Transverse colon (tissue), 4 donors: ENCODE measurements at regions of chr2 and their contacts with region 1.

Region 1: GRCh38 chr2:113198790-113199612 is 25.2 kb downstream of the PSD4 start:
- DNase-seq: peak; percentile 88
- H3K4me3 ChIP-seq: peak overlapping the region; percentile 40 to 83 (median 52)
- H3K27ac ChIP-seq: peak overlapping the region; percentile 81 to 94 (median 89)
- H3K4me1 ChIP-seq: peaks cover 0 to 15% (median 9%) of the 10 kb centered on the region in 4 donors
- H3K27me3 ChIP-seq: no peaks in the 10 kb centered on the region
- CTCF ChIP-seq: peak; percentile 73 to 99 (median 91)
- EP300 ChIP-seq: no peak
- POLR2A ChIP-seq: peak; percentile 79

Region 2: GRCh38 chr2:112159454-112159921 is 1039.5 kb before region 1 on chr2:
- in situ Hi-C with region 1: no loop called
- intact Hi-C with region 1: no loop called
- DNase-seq: no peak
- H3K4me3 ChIP-seq: no peak overlapping the region
- H3K27ac ChIP-seq: no peak overlapping the region
- H3K4me1 ChIP-seq: no peaks in the 10 kb centered on the region
- H3K27me3 ChIP-seq: no peaks in the 10 kb centered on the region
- CTCF ChIP-seq: no peak
- EP300 ChIP-seq: no peak
- POLR2A ChIP-seq: no peak

Region 3: GRCh38 chr2:113138428-113139322 is 60.3 kb before region 1 on chr2:
- in situ Hi-C with region 1: loop called in 3 of 4 experiments (anchors 10 kb)
- intact Hi-C with region 1: no loop called
- DNase-seq: no peak
- H3K4me3 ChIP-seq: peak overlapping the region in 1 of 4 donors; percentile 26
- H3K27ac ChIP-seq: peak overlapping the region in 1 of 4 donors; percentile 31
- H3K4me1 ChIP-seq: peaks cover 0 to 7% (median 3%) of the 10 kb centered on the region in 4 donors
- H3K27me3 ChIP-seq: no peaks in the 10 kb centered on the region
- CTCF ChIP-seq: peak; percentile 76 to 86 (median 84)
- EP300 ChIP-seq: no peak
- POLR2A ChIP-seq: no peak

Region 4: GRCh38 chr2:113148606-113149560 is 50.1 kb before region 1 on chr2:
- in situ Hi-C with region 1: loop called in 1 of 4 experiments (anchors 10 kb)
- intact Hi-C with region 1: no loop called
- DNase-seq: no peak
- H3K4me3 ChIP-seq: no peak overlapping the region
- H3K27ac ChIP-seq: no peak overlapping the region
- H3K4me1 ChIP-seq: no peaks in the 10 kb centered on the region
- H3K27me3 ChIP-seq: no peaks in the 10 kb centered on the region
- CTCF ChIP-seq: no peak
- EP300 ChIP-seq: no peak
- POLR2A ChIP-seq: no peak